AG04450 (cell line): ENCODE measurements at regions of chr16 and their contacts with region 1.

Region 1: GRCh38 chr16:51818342-51818944 is 667.4 kb upstream of the SALL1 start:
- DNase-seq: peak; percentile 44
- H3K4me3 ChIP-seq: no peak overlapping the region
- H3K27ac ChIP-seq: no peak overlapping the region
- H3K27me3 ChIP-seq: no peaks in the 10 kb centered on the region
- CTCF ChIP-seq: peak; percentile 86

Region 2: DNA sequence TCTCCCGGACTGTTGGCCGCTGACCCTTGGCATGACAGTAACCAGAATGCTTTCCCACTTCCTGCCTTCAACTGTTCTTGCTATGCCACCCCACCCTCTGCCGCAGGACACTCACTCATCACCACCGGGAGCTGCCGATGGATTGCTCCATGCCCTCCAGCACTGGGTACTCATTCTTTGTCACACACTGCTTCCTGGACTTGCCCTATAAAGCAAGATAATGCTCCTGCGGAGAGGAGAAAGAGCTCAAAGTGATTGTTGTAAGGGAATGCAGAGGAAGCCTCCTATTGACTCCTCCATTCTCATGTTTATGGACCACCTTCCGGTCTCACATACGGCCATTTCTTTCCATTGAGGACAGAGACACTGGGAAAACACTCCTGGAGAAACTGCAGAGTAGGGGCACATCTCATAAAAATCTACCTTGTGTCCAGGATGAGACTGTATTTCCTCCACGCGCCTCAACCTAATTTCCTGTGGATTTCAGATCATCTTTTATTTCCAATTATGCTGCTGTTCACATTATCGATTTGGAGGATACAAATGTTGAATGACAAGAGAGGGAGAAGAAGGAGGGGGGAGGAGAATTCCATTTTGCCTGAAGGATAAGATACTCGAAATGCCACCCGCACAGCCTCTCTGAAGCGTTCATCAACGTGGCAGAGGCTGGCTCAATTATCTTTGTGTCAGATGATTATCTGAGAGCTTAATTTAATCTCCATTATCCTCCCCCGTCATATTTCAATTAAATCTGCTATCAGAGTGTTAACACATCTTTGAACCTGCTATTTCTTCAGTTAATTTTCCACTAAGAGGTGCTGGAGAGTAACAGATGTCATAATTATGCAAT is 181.3 kb before region 1 on chr16:
- CTCF ChIA-PET with region 1: no interaction called
- POLR2A ChIA-PET with region 1: no interaction called
- DNase-seq: no peak
- H3K4me3 ChIP-seq: no peak overlapping the region
- H3K27ac ChIP-seq: no peak overlapping the region
- H3K27me3 ChIP-seq: no peaks in the 10 kb centered on the region
- CTCF ChIP-seq: no peak

Region 3: GRCh38 chr16:51797669-51798259 is 20.7 kb before region 1 on chr16:
- CTCF ChIA-PET with region 1: interaction called, 12 read pairs
- POLR2A ChIA-PET with region 1: no interaction called
- DNase-seq: no peak
- H3K4me3 ChIP-seq: no peak overlapping the region
- H3K27ac ChIP-seq: no peak overlapping the region
- H3K27me3 ChIP-seq: no peaks in the 10 kb centered on the region
- CTCF ChIP-seq: no peak

Region 4: DNA sequence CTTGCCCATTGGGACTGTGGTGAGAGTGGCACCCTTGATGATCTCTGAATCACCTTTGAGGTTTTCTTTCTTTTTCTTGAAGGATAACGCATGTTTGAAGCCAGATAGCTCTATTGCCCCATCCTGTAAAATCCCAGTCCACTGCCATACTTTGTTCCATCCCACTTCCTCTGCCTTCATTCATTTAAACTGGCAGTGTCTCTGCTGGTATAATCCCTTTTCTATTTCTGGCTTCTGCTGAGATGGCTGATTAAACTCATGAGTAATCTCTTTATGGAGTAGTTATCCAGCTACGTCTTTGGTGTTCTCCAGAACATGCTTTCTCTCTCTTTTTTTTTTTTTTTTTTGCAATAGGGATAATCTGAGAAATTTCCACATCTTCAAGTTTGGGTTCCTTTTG is 10.9 kb before region 1 on chr16:
- CTCF ChIA-PET with region 1: interaction called, 18 read pairs
- POLR2A ChIA-PET with region 1: no interaction called
- DNase-seq: no peak
- H3K4me3 ChIP-seq: no peak overlapping the region
- H3K27ac ChIP-seq: no peak overlapping the region
- H3K27me3 ChIP-seq: no peaks in the 10 kb centered on the region
- CTCF ChIP-seq: no peak

Region 5: GRCh38 chr16:51834133-51834532 is 15.7 kb after region 1 on chr16:
- CTCF ChIA-PET with region 1: interaction called, 25 read pairs
- POLR2A ChIA-PET with region 1: no interaction called
- DNase-seq: peak; percentile 36
- H3K4me3 ChIP-seq: no peak overlapping the region
- H3K27ac ChIP-seq: peak overlapping the region; percentile 23
- H3K27me3 ChIP-seq: no peaks in the 10 kb centered on the region
- CTCF ChIP-seq: no peak

Region 6: GRCh38 chr16:51971184-51971583 is 152.7 kb after region 1 on chr16:
- CTCF ChIA-PET with region 1: interaction called, 63 read pairs
- POLR2A ChIA-PET with region 1: no interaction called
- DNase-seq: no peak
- H3K4me3 ChIP-seq: no peak overlapping the region
- H3K27ac ChIP-seq: no peak overlapping the region
- H3K27me3 ChIP-seq: no peaks in the 10 kb centered on the region
- CTCF ChIP-seq: peak; percentile 57

Region 7: GRCh38 chr16:51982715-51983680 is 164.6 kb after region 1 on chr16:
- CTCF ChIA-PET with region 1: interaction called, 56 read pairs
- POLR2A ChIA-PET with region 1: interaction called, 3 read pairs
- DNase-seq: peak; percentile 47
- H3K4me3 ChIP-seq: no peak overlapping the region
- H3K27ac ChIP-seq: no peak overlapping the region
- H3K27me3 ChIP-seq: no peaks in the 10 kb centered on the region
- CTCF ChIP-seq: peak; percentile 74